ENCODE measurements at regions of chr5 and their contacts with region 1.

Region 1: DNA sequence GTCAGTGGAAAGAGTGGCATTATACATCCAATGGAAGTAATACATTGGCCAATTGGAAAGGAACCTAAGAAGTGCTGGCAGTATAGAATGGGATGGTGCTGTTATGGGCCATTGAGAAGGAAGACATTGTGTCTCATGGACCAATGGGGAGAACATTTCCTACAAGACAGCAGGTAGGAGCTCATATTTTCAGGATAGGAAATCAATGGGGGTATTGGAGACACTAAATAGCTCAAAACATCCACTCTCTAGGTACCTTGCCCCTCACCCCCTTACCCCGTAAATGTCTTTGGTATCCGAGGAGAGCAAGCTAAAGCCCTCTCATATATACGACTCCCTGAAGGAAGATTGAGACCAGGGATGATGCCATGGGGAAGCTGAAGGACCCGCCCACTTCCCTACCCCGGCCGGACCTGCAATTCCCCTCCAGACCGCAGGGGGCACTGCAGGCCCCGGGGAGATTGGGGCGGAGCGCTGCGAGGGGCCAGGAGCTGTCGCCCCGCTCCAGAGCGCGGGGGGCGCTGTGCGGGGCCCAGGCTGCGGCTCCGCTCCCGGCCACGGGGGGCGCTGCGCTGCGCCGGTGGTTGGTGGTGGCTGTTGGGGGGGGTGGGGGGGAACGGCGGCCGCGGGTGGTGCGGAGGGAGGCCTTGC is at the start of gene KDM3B:
- DNase-seq: peak; percentile 85 to 98 (median 95)
- H3K4me3 ChIP-seq: peak within 1 kb of the TSS; percentile 82 to 96
- H3K4me3 Mint-ChIP-seq: peak within 1 kb of the TSS; percentile 93 to 98 (median 96)
- H3K27ac ChIP-seq: peak within 1 kb of the TSS; percentile 89
- H3K27ac Mint-ChIP-seq: peak within 1 kb of the TSS; percentile 95 to 99 (median 97)
- H3K4me1 ChIP-seq: peaks cover 38% of the 10 kb centered on the region
- H3K4me1 Mint-ChIP-seq: peaks cover 31 to 54% (median 43%) of the 10 kb centered on the region in 4 donors
- H3K27me3 ChIP-seq: no peaks in the 10 kb centered on the region
- H3K27me3 Mint-ChIP-seq: peaks cover 0 to 1% of the 10 kb centered on the region in 2 donors
- total RNA-seq, gene KDM3B: 84.7 to 85.6 TPM

Region 2: GRCh38 chr5:137754126-137754960 is 597.9 kb before region 1 on chr5 and contains the start of gene HNRNPA0:
- CTCF ChIA-PET with region 1: no interaction called
- POLR2A ChIA-PET with region 1: interaction called, 12 read pairs
- intact Hi-C with region 1: loop called (anchors 1 kb)
- DNase-seq: peak; percentile 98 to 99 (median 99)
- H3K4me3 ChIP-seq: peak within 1 kb of the TSS; percentile 49 to 96
- H3K4me3 Mint-ChIP-seq: peak within 1 kb of the TSS; percentile 98 to 100 (median 99)
- H3K27ac ChIP-seq: peak within 1 kb of the TSS; percentile 100
- H3K27ac Mint-ChIP-seq: peak within 1 kb of the TSS; percentile 100
- H3K4me1 ChIP-seq: peaks cover 33% of the 10 kb centered on the region
- H3K4me1 Mint-ChIP-seq: peaks cover 26 to 54% (median 34%) of the 10 kb centered on the region in 4 donors
- H3K27me3 ChIP-seq: no peaks in the 10 kb centered on the region
- H3K27me3 Mint-ChIP-seq: peaks cover 0 to 9% of the 10 kb centered on the region in 2 donors
- total RNA-seq, gene HNRNPA0: 30.5 to 30.7 TPM

Region 3: GRCh38 chr5:138096363-138096762 is 255.8 kb before region 1 on chr5:
- CTCF ChIA-PET with region 1: no interaction called
- POLR2A ChIA-PET with region 1: no interaction called
- intact Hi-C with region 1: no loop called
- DNase-seq: no peak
- H3K4me3 ChIP-seq: no peak overlapping the region
- H3K4me3 Mint-ChIP-seq: no peak overlapping the region
- H3K27ac ChIP-seq: no peak overlapping the region
- H3K27ac Mint-ChIP-seq: peak overlapping the region in 1 of 7 donors; percentile 11
- H3K4me1 ChIP-seq: no peaks in the 10 kb centered on the region
- H3K4me1 Mint-ChIP-seq: peaks cover 6 to 9% (median 7%) of the 10 kb centered on the region in 4 donors
- H3K27me3 ChIP-seq: no peaks in the 10 kb centered on the region
- H3K27me3 Mint-ChIP-seq: peaks cover 10% of the 10 kb centered on the region in 2 donors

Region 4: GRCh38 chr5:138213161-138214029 is 138.8 kb before region 1 on chr5 and contains the start of gene CDC23:
- CTCF ChIA-PET with region 1: interaction called, 25 read pairs
- POLR2A ChIA-PET with region 1: interaction called, 4 read pairs
- intact Hi-C with region 1: loop called (anchors 1 kb)
- DNase-seq: peak; percentile 91 to 96 (median 94)
- H3K4me3 ChIP-seq: peak within 1 kb of the TSS; percentile 97 to 100
- H3K4me3 Mint-ChIP-seq: peak within 1 kb of the TSS; percentile 97 to 100 (median 98)
- H3K27ac ChIP-seq: peak within 1 kb of the TSS; percentile 85
- H3K27ac Mint-ChIP-seq: peak within 1 kb of the TSS; percentile 88 to 98 (median 97)
- H3K4me1 ChIP-seq: peaks cover 25% of the 10 kb centered on the region
- H3K4me1 Mint-ChIP-seq: peaks cover 13 to 29% (median 21%) of the 10 kb centered on the region in 4 donors
- H3K27me3 ChIP-seq: no peaks in the 10 kb centered on the region
- H3K27me3 Mint-ChIP-seq: peaks cover 0 to 2% of the 10 kb centered on the region in 2 donors
- total RNA-seq, gene CDC23: 31.9 to 32.5 TPM

Region 5: GRCh38 chr5:138369706-138370105 is 17.5 kb after region 1 on chr5:
- CTCF ChIA-PET with region 1: interaction called, 67 read pairs
- POLR2A ChIA-PET with region 1: interaction called, 7 read pairs
- intact Hi-C with region 1: no loop called
- DNase-seq: no peak
- H3K4me3 ChIP-seq: no peak overlapping the region
- H3K4me3 Mint-ChIP-seq: peak overlapping the region in 1 of 8 donors; percentile 52
- H3K27ac ChIP-seq: no peak overlapping the region
- H3K27ac Mint-ChIP-seq: peak overlapping the region in 2 of 7 donors; percentile 38 to 86
- H3K4me1 ChIP-seq: peaks cover 34% of the 10 kb centered on the region
- H3K4me1 Mint-ChIP-seq: peaks cover 27 to 46% (median 34%) of the 10 kb centered on the region in 4 donors
- H3K27me3 ChIP-seq: no peaks in the 10 kb centered on the region
- H3K27me3 Mint-ChIP-seq: no peaks in the 10 kb centered on the region

Region 6: DNA sequence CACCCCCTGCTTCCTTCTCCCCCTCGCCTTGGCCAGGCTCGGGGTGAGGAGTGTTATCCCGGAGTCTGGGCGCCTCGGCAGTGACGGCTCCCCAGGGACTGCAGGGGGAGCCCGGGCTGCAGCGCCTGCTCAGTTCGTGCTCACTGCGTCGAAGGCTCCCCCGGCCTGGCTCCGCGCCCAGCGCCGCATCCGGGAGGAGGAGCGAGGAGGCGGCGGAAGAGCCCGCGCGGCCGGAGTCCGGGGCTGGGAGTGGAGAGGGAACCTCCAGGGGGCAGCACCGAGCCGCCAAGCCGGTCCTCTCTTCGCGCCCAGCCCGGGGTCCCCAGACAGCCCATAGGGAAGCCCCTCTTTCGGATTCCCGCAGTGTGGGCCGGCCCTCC is 111.8 kb after region 1 on chr5:
- CTCF ChIA-PET with region 1: interaction called, 14 read pairs
- POLR2A ChIA-PET with region 1: interaction called, 6 read pairs
- intact Hi-C with region 1: no loop called
- DNase-seq: peak; percentile 91 to 95 (median 94)
- H3K4me3 ChIP-seq: peak overlapping the region; percentile 79 to 85
- H3K4me3 Mint-ChIP-seq: peak overlapping the region; percentile 85 to 97 (median 90)
- H3K27ac ChIP-seq: peak overlapping the region; percentile 90
- H3K27ac Mint-ChIP-seq: peak overlapping the region; percentile 89 to 96 (median 93)
- H3K4me1 ChIP-seq: peaks cover 46% of the 10 kb centered on the region
- H3K4me1 Mint-ChIP-seq: peaks cover 27 to 65% (median 39%) of the 10 kb centered on the region in 4 donors
- H3K27me3 ChIP-seq: no peaks in the 10 kb centered on the region
- H3K27me3 Mint-ChIP-seq: no peaks in the 10 kb centered on the region

Region 7: DNA sequence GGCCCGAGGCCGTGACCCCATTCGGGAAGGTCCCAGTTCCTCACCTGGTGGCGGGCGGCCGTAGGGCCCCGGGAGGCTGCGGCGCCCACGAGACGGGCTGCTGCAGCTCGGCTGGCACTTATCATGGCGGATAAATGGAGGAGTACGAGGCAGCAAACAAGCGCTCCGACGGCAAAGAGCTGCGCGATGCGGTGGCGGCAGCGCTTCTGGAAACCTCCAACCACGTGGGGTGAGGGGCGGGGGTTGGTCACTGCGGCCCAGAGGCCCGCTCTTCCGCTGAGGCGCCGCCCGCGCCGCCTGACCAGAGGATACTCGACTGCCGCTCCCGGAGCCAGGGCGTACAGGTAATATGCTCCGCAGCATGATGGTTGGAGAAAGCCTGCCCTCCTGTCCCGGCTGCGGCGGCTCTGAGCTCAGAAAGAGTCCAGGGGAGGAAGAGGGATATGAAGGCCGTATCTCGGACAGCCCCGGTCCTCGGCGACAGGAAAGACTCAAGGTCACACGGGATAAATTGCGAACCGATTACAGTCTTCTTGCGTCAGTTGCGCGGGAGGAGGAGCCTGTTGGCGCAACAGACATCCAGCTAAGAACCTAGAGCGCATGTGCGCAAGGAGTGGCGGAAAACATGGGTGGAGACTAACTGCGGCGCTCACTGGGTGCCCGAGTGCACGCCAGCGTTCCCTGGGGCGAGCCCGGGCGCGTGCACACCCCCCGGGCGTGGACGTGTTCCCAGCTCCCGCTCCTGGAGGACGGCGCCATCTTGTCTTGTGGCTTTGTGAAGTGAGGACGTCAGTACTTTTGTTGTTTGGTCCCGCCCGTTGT is 223.2 kb after region 1 on chr5 and contains the start of gene HSPA9:
- CTCF ChIA-PET with region 1: interaction called, 7 read pairs
- POLR2A ChIA-PET with region 1: interaction called, 12 read pairs
- intact Hi-C with region 1: no loop called
- DNase-seq: peak; percentile 98 to 99 (median 98)
- H3K4me3 ChIP-seq: peak within 1 kb of the TSS; percentile 88 to 99
- H3K4me3 Mint-ChIP-seq: peak within 1 kb of the TSS; percentile 92 to 99 (median 98)
- H3K27ac ChIP-seq: peak within 1 kb of the TSS; percentile 99
- H3K27ac Mint-ChIP-seq: peak within 1 kb of the TSS; percentile 100
- H3K4me1 ChIP-seq: peaks cover 28% of the 10 kb centered on the region
- H3K4me1 Mint-ChIP-seq: peaks cover 18 to 51% (median 35%) of the 10 kb centered on the region in 4 donors
- H3K27me3 ChIP-seq: no peaks in the 10 kb centered on the region
- H3K27me3 Mint-ChIP-seq: no peaks in the 10 kb centered on the region
- total RNA-seq, gene HSPA9: 144 to 171 TPM

Measured in CD4-positive, alpha-beta memory T cell (primary cell).